Activated naive CD8-positive, alpha-beta T cell treated with anti-CD3 and anti-CD28 coated beads, Interleukin-2, amount 10 ng/mL, durations not matched to agents 7 days and 5 days (primary cell): ENCODE measurements at regions of chr17 and their contacts with region 1.

Region 1: DNA sequence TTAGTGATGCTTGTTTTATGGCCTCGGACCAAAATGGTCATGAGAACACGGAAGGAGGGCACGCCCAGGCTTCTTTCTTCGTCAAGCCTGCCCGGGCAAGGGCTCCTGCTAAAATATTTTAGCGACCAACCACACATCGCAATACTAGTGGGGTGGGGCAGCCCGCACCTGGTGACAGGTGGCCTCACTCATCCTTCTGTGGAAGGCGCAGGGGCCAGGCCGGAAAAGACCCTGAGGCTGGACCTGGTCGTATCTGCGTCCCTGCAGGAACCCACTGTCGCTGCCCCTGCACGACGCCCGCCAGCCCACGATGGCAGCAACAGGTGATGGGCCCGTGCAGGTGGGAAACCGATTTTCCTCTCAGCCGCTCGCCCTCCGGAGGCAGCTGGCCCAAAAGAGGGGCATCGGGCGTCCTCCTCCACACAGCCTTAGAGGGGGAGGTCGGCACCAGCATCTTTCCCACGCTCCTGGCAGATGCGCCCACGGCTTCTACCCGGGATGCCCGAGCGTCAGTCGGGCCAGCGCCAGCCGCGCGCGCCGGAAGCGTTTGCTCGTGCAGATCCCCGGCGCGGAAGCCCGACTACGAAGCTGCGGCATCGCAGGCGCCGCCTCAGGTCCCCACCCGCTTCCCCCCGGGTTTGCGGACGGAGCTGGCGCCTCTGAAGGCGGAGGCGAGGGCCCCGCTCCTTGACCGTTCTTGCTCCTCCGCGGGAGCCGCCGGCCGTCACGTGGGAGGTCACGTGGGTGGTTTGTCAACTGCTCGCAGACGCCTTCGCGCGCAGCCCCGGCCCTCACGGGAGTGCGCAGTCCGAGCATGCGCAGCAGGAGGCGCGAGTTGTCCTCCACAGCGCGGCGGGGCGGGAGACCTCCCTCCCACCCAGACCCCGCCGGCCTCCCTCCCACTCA is 22.8 kb upstream of the FOXK2 start:
- DNase-seq: peak; percentile 93
- ATAC-seq: peak; percentile 66
- H3K4me3 Mint-ChIP-seq: peak overlapping the region; percentile 62
- H3K27ac Mint-ChIP-seq: peak overlapping the region; percentile 69
- H3K4me1 Mint-ChIP-seq: peaks cover 21% of the 10 kb centered on the region
- H3K27me3 Mint-ChIP-seq: no peaks in the 10 kb centered on the region

Region 2: DNA sequence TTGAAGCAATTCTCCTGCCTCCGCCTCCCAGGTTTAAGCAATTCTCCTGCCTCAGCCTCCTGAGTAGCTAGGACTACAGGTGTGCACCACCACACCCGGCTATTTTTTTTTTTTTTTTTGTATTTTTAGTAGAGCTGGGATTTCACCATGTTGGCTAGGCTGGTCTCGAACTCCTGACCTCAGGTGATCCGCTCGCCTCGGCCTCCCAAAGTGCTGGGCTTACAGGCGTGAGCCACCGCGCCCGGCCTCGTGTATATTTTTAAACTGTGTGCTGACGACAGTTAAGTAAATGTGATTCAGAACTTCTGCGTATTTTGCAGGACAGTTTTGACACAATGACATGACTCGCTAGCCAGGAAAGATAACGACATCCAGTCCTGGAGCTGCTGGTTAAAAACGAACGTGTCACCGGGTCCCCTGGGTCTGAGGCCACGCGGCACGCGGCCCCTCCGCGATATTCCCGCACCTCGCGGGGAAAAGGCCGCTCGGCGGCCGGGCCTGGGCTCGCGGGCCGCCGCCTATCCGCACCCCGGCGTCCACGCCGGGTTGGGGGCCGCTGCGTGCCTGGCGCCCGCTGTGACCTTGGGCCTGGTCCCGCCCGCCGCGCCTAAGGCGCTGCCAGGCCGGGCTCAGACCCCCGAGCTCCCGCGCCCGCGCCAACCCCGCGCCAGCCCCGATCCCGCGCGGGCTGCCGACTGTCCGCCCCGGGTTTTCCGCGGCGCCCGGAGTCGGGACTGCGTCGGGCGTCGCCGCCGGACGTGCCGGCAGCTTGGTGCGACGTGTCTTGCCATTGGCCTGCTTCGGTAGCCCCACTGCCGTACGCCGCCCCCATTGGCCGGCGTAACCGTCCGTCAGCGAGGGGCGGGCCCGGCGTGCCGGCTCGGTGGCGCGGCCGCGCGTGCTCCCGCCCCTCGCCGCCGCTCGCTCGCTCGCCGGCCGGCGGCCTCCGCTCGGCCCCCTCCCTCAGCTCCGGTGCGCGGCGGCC is 22.3 kb after region 1 on chr17 and contains the start of gene FOXK2:
- POLR2A ChIA-PET with region 1: interaction called, 11 read pairs
- DNase-seq: peak; percentile 100
- ATAC-seq: peak; percentile 98
- H3K4me3 Mint-ChIP-seq: peak within 1 kb of the TSS; percentile 86
- H3K27ac Mint-ChIP-seq: peak within 1 kb of the TSS; percentile 84
- H3K4me1 Mint-ChIP-seq: peaks cover 15% of the 10 kb centered on the region
- H3K27me3 Mint-ChIP-seq: no peaks in the 10 kb centered on the region
- total RNA-seq, gene FOXK2: 59.6 to 60.8 TPM